ENCODE measurements at regions of chr18 and their contacts with region 1.

Region 1: GRCh38 chr18:63422087-63422809 is at the start of gene VPS4B:
- DNase-seq: peak; percentile 98 to 100 (median 99)
- ATAC-seq: peak; percentile 92
- H3K4me3 ChIP-seq: peak within 1 kb of the TSS; percentile 83
- H3K4me3 Mint-ChIP-seq: peak within 1 kb of the TSS; percentile 96
- H3K27ac ChIP-seq: peak within 1 kb of the TSS; percentile 84 to 93
- H3K27ac Mint-ChIP-seq: peak within 1 kb of the TSS; percentile 95
- H3K4me1 ChIP-seq: peaks cover 42% of the 10 kb centered on the region
- H3K4me1 Mint-ChIP-seq: peaks cover 25% of the 10 kb centered on the region
- H3K27me3 ChIP-seq: no peaks in the 10 kb centered on the region
- H3K27me3 Mint-ChIP-seq: peaks cover 8% of the 10 kb centered on the region
- CTCF ChIP-seq: no peak
- total RNA-seq, gene VPS4B: 46.0 to 50.8 TPM

Region 2: DNA sequence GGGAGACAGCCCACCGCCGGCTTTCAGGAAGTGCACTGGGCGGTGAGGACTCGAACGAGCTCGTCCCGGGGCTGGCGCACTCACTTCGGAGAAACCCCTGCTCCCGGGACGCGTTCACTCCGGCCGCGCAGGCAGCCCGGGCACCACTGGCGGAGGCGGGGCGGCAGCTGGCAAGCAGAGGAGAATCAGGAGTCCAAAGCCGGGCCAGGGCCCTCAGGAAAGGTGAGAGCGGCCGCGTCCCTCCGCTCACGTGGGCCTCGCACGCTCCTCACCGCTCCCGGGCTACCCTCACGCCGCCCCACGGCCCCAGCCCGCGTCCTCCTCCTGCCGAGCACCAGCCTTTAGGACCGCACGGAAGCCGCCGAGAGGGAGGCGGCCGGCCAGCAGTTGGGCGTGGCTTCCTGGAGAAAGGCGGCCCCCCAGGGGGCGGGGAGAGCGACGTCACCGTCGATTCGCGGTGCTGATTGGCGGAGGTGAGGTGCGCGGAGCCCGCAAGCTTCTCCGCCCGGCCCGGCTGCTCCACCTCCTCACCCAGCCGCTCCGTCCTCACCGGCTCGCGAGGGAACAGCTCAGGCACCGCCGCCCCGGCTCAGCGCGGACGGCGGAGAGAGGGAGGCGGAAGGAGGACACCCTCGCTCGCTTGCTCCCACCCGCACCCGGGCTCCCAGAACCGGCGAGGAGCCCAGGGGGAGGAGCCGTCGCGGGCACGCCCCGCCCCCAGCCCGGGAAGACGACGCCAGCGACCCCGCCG is 899.6 kb before region 1 on chr18 and contains the start of gene ZCCHC2:
- CTCF ChIA-PET with region 1: no interaction called
- POLR2A ChIA-PET with region 1: interaction called, 18 read pairs
- intact Hi-C with region 1: loop called in 1 of 2 experiments (anchors 5 kb)
- DNase-seq: peak; percentile 95 to 100 (median 98)
- ATAC-seq: peak; percentile 74
- H3K4me3 ChIP-seq: peak within 1 kb of the TSS; percentile 92
- H3K4me3 Mint-ChIP-seq: peak within 1 kb of the TSS; percentile 98
- H3K27ac ChIP-seq: peak within 1 kb of the TSS; percentile 62 to 75
- H3K27ac Mint-ChIP-seq: peak within 1 kb of the TSS; percentile 93
- H3K4me1 ChIP-seq: peaks cover 25% of the 10 kb centered on the region
- H3K4me1 Mint-ChIP-seq: peaks cover 40% of the 10 kb centered on the region
- H3K27me3 ChIP-seq: no peaks in the 10 kb centered on the region
- H3K27me3 Mint-ChIP-seq: no peaks in the 10 kb centered on the region
- CTCF ChIP-seq: no peak
- total RNA-seq, gene ZCCHC2: 85.0 to 85.4 TPM

Region 3: GRCh38 chr18:63161761-63162195 is 260.5 kb before region 1 on chr18:
- CTCF ChIA-PET with region 1: no interaction called
- POLR2A ChIA-PET with region 1: interaction called, 5 read pairs
- intact Hi-C with region 1: loop called in 1 of 2 experiments (anchors 5 kb)
- DNase-seq: peak; percentile 66 to 94 (median 74)
- ATAC-seq: peak; percentile 84
- H3K4me3 ChIP-seq: peak overlapping the region; percentile 38
- H3K4me3 Mint-ChIP-seq: peak overlapping the region; percentile 65
- H3K27ac ChIP-seq: peak overlapping the region; percentile 95 to 96
- H3K27ac Mint-ChIP-seq: peak overlapping the region; percentile 91
- H3K4me1 ChIP-seq: peaks cover 81% of the 10 kb centered on the region
- H3K4me1 Mint-ChIP-seq: peaks cover 78% of the 10 kb centered on the region
- H3K27me3 ChIP-seq: no peaks in the 10 kb centered on the region
- H3K27me3 Mint-ChIP-seq: no peaks in the 10 kb centered on the region
- CTCF ChIP-seq: no peak

Region 4: DNA sequence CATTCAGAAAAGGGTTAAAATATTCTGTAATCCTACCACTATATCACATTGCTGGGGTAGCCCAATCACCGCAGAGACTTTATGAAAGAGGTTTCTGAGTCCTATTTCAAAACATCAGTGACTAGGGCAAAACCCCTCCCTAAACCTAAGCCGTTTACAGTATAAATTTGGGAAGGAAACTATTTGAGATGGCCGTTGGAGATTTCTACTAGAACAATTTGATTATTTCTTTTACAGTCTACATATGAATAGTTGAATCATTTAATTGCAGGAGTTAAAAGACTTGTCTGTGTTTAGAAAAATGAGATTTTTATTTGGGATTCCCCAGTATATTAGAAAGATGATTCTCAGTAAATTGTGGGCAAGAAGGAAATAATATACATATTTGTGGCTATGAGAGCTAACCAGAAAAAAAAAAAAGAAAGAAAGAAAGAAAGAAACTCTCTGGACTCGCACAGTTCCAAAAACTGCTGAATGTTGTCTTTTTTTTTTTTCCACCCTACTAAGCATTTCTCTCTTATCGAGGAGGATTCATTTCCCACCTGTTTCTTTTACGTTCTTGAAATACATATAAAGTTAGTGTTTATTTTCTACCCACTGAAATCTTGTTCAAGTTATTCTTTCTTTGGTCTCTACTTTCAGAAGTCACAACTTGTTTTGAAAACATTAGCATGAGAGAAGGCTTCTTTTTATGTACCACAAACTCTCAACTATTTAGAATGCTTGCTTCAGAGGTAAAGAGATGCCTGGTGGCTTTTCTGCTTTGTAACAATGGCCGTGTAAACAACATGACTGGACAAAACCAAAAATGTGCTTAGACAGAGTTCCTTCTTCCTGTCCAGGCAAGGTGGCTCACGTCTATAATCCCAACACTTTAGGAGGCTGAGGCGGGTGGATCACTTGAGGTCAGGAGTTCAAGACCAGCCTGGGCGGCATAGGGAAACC is 168.5 kb before region 1 on chr18:
- CTCF ChIA-PET with region 1: no interaction called
- POLR2A ChIA-PET with region 1: no interaction called
- intact Hi-C with region 1: no loop called
- DNase-seq: peak in 1 of 14 experiments; percentile 22
- ATAC-seq: no peak
- H3K4me3 ChIP-seq: no peak overlapping the region
- H3K4me3 Mint-ChIP-seq: peak overlapping the region; percentile 50
- H3K27ac ChIP-seq: peak overlapping the region in 1 of 2 donors; percentile 26
- H3K27ac Mint-ChIP-seq: peak overlapping the region; percentile 63
- H3K4me1 ChIP-seq: peaks cover 19% of the 10 kb centered on the region
- H3K4me1 Mint-ChIP-seq: peaks cover 81% of the 10 kb centered on the region
- H3K27me3 ChIP-seq: no peaks in the 10 kb centered on the region
- H3K27me3 Mint-ChIP-seq: no peaks in the 10 kb centered on the region
- CTCF ChIP-seq: no peak

Region 5: DNA sequence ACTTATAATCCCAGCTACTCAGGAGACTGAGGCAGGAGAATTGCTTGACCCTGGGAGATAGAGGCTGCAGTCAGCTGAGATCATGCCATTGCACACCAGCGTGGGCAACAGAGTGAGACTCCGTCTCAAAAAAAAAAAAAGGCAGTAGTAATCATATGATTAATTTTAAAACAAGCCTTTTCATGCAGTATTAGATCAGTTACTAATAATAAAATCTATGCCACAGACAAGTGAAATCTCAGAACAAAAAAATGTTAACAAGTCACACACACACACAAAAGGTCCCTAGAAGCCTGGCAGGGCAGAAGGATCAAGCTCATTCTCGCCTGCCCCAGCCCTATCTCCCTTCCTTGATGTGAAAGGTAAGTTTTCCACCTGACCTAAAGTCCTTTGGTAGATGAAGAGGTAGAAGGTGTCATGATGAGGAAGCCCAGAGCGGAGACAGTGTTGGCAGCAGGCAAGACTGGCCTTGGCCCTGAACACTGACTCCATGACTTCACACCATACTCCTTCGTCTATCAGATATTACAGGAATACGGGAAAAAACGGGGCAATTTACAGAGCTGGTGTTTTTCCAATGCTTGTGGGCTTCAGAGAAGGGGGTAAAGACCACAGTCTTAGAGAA is 65.9 kb before region 1 on chr18:
- CTCF ChIA-PET with region 1: no interaction called
- POLR2A ChIA-PET with region 1: no interaction called
- intact Hi-C with region 1: no loop called
- DNase-seq: no peak
- ATAC-seq: no peak
- H3K4me3 ChIP-seq: no peak overlapping the region
- H3K4me3 Mint-ChIP-seq: no peak overlapping the region
- H3K27ac ChIP-seq: no peak overlapping the region
- H3K27ac Mint-ChIP-seq: no peak overlapping the region
- H3K4me1 ChIP-seq: no peaks in the 10 kb centered on the region
- H3K4me1 Mint-ChIP-seq: no peaks in the 10 kb centered on the region
- H3K27me3 ChIP-seq: no peaks in the 10 kb centered on the region
- H3K27me3 Mint-ChIP-seq: no peaks in the 10 kb centered on the region
- CTCF ChIP-seq: no peak

Region 6: DNA sequence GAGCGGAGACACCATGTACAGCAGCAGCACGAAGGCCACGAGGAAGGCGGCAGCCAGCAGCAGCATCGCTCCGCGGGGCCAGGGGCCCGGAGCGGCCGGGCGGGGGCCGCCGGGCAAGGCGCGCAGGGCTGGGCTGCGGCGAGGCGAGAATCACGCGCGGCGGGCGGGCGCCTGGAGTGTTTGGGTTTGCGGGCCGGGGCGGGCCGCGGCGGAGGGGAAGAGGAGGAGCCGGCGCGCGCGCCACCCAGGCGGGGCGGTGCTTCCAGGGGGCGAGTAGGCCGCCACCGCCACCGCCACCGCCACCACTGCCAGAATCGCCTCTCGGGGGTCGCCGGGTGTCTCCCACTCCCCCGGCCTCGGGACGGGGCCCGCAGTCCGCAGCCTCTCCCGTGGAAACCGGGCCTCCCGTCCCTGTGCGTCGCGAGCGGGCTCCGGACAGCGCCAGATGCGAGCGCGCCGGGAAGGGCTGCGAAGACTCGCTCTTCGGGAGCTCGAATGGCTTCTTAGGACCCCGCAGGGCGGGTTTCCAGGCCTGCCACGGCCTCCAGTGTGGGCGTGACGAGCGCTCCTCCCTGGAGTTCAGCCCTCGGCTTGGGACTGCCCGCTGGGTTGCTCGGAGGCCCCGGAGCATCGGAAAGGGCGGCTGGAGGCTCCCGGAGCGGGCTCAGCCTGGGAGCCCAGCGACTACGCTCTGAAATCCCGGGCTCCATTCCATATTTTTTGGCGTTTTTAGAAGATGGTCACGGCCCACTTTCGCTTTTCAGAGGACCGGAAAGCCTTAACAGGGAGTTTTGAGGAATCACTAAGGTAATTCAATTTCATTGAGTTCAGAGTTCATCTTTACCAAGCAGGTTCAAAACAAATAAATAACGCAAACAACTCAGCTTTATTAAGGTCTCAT is 54.9 kb before region 1 on chr18 and contains the start of gene KDSR:
- CTCF ChIA-PET with region 1: no interaction called
- POLR2A ChIA-PET with region 1: interaction called, 46 read pairs
- intact Hi-C with region 1: loop called (anchors 1 to 2 kb)
- DNase-seq: peak; percentile 63 to 91 (median 77)
- ATAC-seq: peak; percentile 80
- H3K4me3 ChIP-seq: peak within 1 kb of the TSS; percentile 94
- H3K4me3 Mint-ChIP-seq: peak within 1 kb of the TSS; percentile 94
- H3K27ac ChIP-seq: peak within 1 kb of the TSS; percentile 65 to 72
- H3K27ac Mint-ChIP-seq: peak within 1 kb of the TSS; percentile 91
- H3K4me1 ChIP-seq: peaks cover 33% of the 10 kb centered on the region
- H3K4me1 Mint-ChIP-seq: peaks cover 56% of the 10 kb centered on the region
- H3K27me3 ChIP-seq: no peaks in the 10 kb centered on the region
- H3K27me3 Mint-ChIP-seq: no peaks in the 10 kb centered on the region
- CTCF ChIP-seq: no peak
- total RNA-seq, gene KDSR: 21.1 to 23.5 TPM

Region 7: DNA sequence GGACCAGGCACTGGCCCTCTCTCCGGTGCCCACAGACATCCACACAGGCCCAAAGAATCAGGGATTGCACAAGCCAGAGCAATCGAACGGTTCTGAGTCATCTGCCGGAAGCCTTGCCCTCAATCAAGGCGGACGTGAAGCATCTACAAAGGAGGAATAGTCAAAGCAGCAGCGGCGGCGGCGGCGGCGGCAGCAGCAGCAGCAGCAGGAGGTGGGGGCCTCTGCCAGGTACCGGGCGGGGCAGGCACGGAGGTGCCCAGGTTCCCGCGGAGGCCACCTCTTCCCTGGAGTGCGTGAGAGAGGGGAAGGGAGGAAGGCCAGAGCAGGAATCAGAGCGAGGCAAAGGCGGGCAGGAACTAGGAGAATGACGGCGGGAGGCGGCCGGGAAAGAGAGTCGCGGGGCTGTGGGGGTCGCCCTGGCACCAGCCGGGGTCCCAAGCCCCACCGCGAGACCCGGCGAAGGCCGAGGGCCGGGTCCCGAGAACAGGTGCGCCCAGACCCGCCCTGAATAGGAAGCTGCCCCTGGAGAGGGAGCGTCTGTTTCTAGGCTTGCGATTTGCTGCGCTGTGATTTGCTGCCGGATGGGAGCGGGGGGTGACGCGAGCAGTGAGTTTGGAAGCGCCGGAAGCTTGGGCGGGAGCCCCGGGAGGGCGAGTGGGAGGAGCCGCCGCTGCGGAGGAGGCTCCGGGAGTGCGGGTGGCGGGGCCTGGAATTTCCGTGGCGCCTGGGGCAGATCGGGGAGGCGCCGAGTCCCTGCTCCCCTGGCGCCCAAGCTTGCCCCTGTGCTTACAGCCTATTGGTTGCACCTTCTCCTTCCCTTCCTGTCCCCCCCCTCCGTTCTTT is 547.9 kb after region 1 on chr18 and contains the start of gene SERPINB8:
- CTCF ChIA-PET with region 1: no interaction called
- POLR2A ChIA-PET with region 1: interaction called, 3 read pairs
- intact Hi-C with region 1: loop called (anchors 5 kb)
- DNase-seq: peak; percentile 65 to 89 (median 76)
- ATAC-seq: peak; percentile 90
- H3K4me3 ChIP-seq: peak within 1 kb of the TSS; percentile 77
- H3K4me3 Mint-ChIP-seq: peak within 1 kb of the TSS; percentile 99
- H3K27ac ChIP-seq: peak within 1 kb of the TSS; percentile 84 to 93
- H3K27ac Mint-ChIP-seq: peak within 1 kb of the TSS; percentile 99
- H3K4me1 ChIP-seq: peaks cover 21% of the 10 kb centered on the region
- H3K4me1 Mint-ChIP-seq: peaks cover 27% of the 10 kb centered on the region
- H3K27me3 ChIP-seq: no peaks in the 10 kb centered on the region
- H3K27me3 Mint-ChIP-seq: peaks cover 4% of the 10 kb centered on the region
- CTCF ChIP-seq: peak; percentile 2
- total RNA-seq, gene SERPINB8: 9.8 to 11.0 TPM